Ascending aorta (tissue), 2 donors: ENCODE measurements at regions of chr3 and their contacts with region 1.

Region 1: DNA sequence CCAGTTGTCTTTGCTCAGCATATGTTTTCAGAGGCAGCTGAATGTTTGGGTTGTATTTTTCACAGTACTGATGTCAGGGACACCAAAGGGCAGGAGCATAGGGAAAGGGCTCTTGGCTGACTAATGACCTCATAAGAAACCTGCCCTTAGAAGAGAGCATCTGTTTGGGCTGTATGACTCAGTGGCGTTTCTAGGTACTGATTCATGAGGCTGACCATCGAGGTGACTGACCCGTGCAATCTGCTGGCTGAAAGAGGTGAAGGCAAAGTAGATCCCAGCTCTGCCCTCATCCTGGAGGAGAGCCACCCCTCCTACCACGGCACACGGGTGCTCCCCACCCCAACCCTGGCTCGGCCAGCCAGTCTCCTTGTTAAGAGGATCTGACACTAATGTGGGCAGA is 8.3 kb downstream of the LMCD1 start:
- DNase-seq: peak; percentile 31 to 79
- H3K4me3 ChIP-seq: peak overlapping the region; percentile 25 to 77
- H3K27ac ChIP-seq: peak overlapping the region; percentile 81 to 91
- H3K4me1 ChIP-seq: peaks cover 14 to 60% of the 10 kb centered on the region in 2 donors
- H3K27me3 ChIP-seq: no peaks in the 10 kb centered on the region
- CTCF ChIP-seq: no peak

Region 2: DNA sequence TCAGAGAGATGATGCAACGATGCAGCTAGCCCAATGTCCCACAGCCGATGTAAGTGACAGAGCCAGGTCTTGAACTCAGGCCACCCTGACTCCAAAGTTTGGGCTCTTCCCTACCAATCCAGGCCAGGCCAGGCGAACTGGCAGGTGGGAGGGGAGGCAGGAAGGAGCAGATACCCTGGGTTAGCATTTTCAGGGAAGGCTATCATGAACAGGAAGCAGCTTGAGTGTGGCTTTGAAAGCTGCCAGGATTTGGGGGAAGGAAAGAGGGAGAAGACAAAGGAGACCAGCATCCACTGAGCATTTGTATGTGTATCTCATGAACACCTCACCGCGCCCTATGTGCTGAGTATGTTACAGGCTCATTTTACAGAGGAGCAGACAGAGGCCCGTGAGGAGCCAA is 30.5 kb after region 1 on chr3:
- intact Hi-C with region 1: loop called (anchors 5 kb)
- DNase-seq: no peak
- H3K4me3 ChIP-seq: no peak overlapping the region
- H3K27ac ChIP-seq: peak overlapping the region; percentile 40 to 55
- H3K4me1 ChIP-seq: peaks cover 8 to 34% of the 10 kb centered on the region in 2 donors
- H3K27me3 ChIP-seq: no peaks in the 10 kb centered on the region
- CTCF ChIP-seq: no peak

Region 3: GRCh38 chr3:8629151-8630021 is 119.4 kb after region 1 on chr3:
- intact Hi-C with region 1: loop called (anchors 5 kb)
- DNase-seq: peak; percentile 38 to 92
- H3K4me3 ChIP-seq: no peak overlapping the region
- H3K27ac ChIP-seq: no peak overlapping the region
- H3K4me1 ChIP-seq: peaks cover 0 to 3% of the 10 kb centered on the region in 2 donors
- H3K27me3 ChIP-seq: no peaks in the 10 kb centered on the region
- CTCF ChIP-seq: no peak